PC-3 (cell line): ENCODE measurements at regions of chr12 and their contacts with region 1.

Region 1: DNA sequence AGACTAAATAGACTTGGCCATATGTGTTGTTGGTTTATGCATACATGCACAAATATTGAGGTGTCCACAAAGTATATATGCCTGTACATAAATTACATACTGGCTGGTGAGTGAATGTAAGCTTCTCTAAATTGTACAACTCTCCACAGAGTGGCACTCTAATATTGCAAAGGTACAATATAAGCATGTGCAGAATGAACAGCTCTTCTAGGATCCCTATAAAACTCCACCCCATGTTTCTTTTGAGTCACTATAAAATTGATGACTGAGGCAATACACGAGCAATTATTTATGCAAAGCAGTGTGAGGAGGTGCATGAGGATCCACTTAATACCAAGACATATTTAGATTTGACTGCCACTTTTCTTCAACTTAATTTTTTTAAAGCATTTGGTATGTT is 172.2 kb downstream of the NAV3 start:
- DNase-seq: peak; percentile 19
- ATAC-seq: peak; percentile 57
- H3K4me3 ChIP-seq: no peak overlapping the region
- H3K27ac ChIP-seq: no peak overlapping the region
- H3K4me1 ChIP-seq: no peaks in the 10 kb centered on the region
- H3K27me3 ChIP-seq: no peaks in the 10 kb centered on the region
- CTCF ChIP-seq: peak; percentile 26; the same call in 1 of the 2 replicates

Region 2: GRCh38 chr12:78096909-78097597 is 94.2 kb after region 1 on chr12:
- CTCF ChIA-PET with region 1: no interaction called
- POLR2A ChIA-PET with region 1: no interaction called
- intact Hi-C with region 1: loop called (anchors 5 kb)
- DNase-seq: no peak
- ATAC-seq: no peak
- H3K4me3 ChIP-seq: no peak overlapping the region
- H3K27ac ChIP-seq: no peak overlapping the region
- H3K4me1 ChIP-seq: peaks cover 14% of the 10 kb centered on the region
- H3K27me3 ChIP-seq: no peaks in the 10 kb centered on the region
- CTCF ChIP-seq: no peak